ENCODE measurements at regions of chr16 and their contacts with region 1.

Region 1: GRCh38 chr16:68685685-68686478 is 40.8 kb downstream of the CDH3 start:
- DNase-seq: no peak
- ATAC-seq: no peak
- H3K4me3 ChIP-seq: no peak overlapping the region
- H3K27ac ChIP-seq: no peak overlapping the region
- H3K4me1 ChIP-seq: no peaks in the 10 kb centered on the region
- H3K27me3 ChIP-seq: no peaks in the 10 kb centered on the region
- CTCF ChIP-seq: no peak
- POLR2A ChIP-seq: no peak
- RAD21 ChIP-seq: no peak

Region 2: GRCh38 chr16:68617734-68618133 is 68.1 kb before region 1 on chr16:
- CTCF ChIA-PET with region 1: no interaction called
- POLR2A ChIA-PET with region 1: interaction called, 12 read pairs
- dilution Hi-C with region 1: no loop called
- in situ Hi-C with region 1: no loop called
- intact Hi-C with region 1: no loop called
- DNase-seq: no peak
- ATAC-seq: no peak
- H3K4me3 ChIP-seq: no peak overlapping the region
- H3K27ac ChIP-seq: no peak overlapping the region
- H3K4me1 ChIP-seq: no peaks in the 10 kb centered on the region
- H3K27me3 ChIP-seq: no peaks in the 10 kb centered on the region
- CTCF ChIP-seq: no peak
- POLR2A ChIP-seq: no peak
- RAD21 ChIP-seq: no peak

Region 3: GRCh38 chr16:68704232-68704867 is 18.5 kb after region 1 on chr16:
- CTCF ChIA-PET with region 1: no interaction called
- POLR2A ChIA-PET with region 1: no interaction called
- dilution Hi-C with region 1: no loop called
- in situ Hi-C with region 1: no loop called
- intact Hi-C with region 1: no loop called
- DNase-seq: peak; percentile 48
- ATAC-seq: peak; percentile 91
- H3K4me3 ChIP-seq: no peak overlapping the region
- H3K27ac ChIP-seq: no peak overlapping the region
- H3K4me1 ChIP-seq: peaks cover 4% of the 10 kb centered on the region; the same call in 1 of the 2 replicates
- H3K27me3 ChIP-seq: no peaks in the 10 kb centered on the region; the same call in none of the 2 replicates
- CTCF ChIP-seq: peak; percentile 65
- POLR2A ChIP-seq: no peak
- RAD21 ChIP-seq: peak; percentile 69

Region 4: GRCh38 chr16:68995011-68995504 is 309.2 kb after region 1 on chr16:
- CTCF ChIA-PET with region 1: no interaction called
- POLR2A ChIA-PET with region 1: no interaction called
- dilution Hi-C with region 1: no loop called
- in situ Hi-C with region 1: no loop called
- intact Hi-C with region 1: no loop called
- DNase-seq: peak; percentile 58
- ATAC-seq: peak; percentile 34
- H3K4me3 ChIP-seq: no peak overlapping the region
- H3K27ac ChIP-seq: 0 out of 2 replicates have a peak overlapping the region, but pooled peaks have one; percentile 6
- H3K4me1 ChIP-seq: peaks cover 16% of the 10 kb centered on the region
- H3K27me3 ChIP-seq: no peaks in the 10 kb centered on the region
- CTCF ChIP-seq: peak; percentile 39; the same call in 1 of the 2 replicates
- POLR2A ChIP-seq: no peak
- RAD21 ChIP-seq: peak; percentile 33; the same call in 1 of the 2 replicates